ENCODE measurements at regions of chr1 and their contacts with region 1.

Region 1: GRCh38 chr1:92784639-92785500 is at the start of gene EVI5:
- DNase-seq: peak; percentile 96
- H3K4me3 Mint-ChIP-seq: peak within 1 kb of the TSS; percentile 72
- H3K27ac Mint-ChIP-seq: peak within 1 kb of the TSS; percentile 81
- H3K4me1 Mint-ChIP-seq: peaks cover 22% of the 10 kb centered on the region
- H3K27me3 Mint-ChIP-seq: no peaks in the 10 kb centered on the region
- CTCF ChIP-seq: no peak
- total RNA-seq, gene EVI5: 29.5 and 33.9 TPM in 2 replicates

Region 2: GRCh38 chr1:92749024-92749634 is 35.7 kb before region 1 on chr1:
- CTCF ChIA-PET with region 1: interaction called, 21 read pairs
- intact Hi-C with region 1: no loop called
- DNase-seq: peak; percentile 50
- H3K4me3 Mint-ChIP-seq: no peak overlapping the region
- H3K27ac Mint-ChIP-seq: no peak overlapping the region
- H3K4me1 Mint-ChIP-seq: peaks cover 25% of the 10 kb centered on the region
- H3K27me3 Mint-ChIP-seq: no peaks in the 10 kb centered on the region
- CTCF ChIP-seq: peak; percentile 62

Region 3: DNA sequence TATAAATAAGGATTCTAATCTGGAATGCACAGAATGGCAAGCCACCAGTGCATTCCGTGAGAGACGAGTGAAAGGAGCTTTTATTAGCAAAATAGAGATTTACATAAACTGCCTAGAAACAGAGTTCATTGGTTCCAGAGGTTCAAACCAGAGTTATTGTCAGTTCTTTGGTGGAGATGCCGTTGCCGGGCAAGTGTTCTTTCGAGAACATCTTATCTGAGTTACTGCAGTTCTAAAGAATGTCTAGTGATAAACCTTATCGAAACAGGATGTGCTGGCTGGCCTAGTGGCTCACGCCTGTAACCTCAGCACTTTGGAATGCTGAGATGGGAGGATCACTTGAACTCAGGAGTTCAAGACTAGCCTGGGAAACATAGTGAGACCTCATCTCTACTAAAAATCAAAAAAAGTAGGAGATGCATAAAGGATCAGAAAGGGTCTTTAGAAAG is 19.9 kb after region 1 on chr1:
- CTCF ChIA-PET with region 1: interaction called, 7 read pairs
- intact Hi-C with region 1: loop called (anchors 2 kb)
- DNase-seq: peak; percentile 73
- H3K4me3 Mint-ChIP-seq: no peak overlapping the region
- H3K27ac Mint-ChIP-seq: peak overlapping the region; percentile 87
- H3K4me1 Mint-ChIP-seq: peaks cover 45% of the 10 kb centered on the region
- H3K27me3 Mint-ChIP-seq: no peaks in the 10 kb centered on the region
- CTCF ChIP-seq: no peak

Region 4: DNA sequence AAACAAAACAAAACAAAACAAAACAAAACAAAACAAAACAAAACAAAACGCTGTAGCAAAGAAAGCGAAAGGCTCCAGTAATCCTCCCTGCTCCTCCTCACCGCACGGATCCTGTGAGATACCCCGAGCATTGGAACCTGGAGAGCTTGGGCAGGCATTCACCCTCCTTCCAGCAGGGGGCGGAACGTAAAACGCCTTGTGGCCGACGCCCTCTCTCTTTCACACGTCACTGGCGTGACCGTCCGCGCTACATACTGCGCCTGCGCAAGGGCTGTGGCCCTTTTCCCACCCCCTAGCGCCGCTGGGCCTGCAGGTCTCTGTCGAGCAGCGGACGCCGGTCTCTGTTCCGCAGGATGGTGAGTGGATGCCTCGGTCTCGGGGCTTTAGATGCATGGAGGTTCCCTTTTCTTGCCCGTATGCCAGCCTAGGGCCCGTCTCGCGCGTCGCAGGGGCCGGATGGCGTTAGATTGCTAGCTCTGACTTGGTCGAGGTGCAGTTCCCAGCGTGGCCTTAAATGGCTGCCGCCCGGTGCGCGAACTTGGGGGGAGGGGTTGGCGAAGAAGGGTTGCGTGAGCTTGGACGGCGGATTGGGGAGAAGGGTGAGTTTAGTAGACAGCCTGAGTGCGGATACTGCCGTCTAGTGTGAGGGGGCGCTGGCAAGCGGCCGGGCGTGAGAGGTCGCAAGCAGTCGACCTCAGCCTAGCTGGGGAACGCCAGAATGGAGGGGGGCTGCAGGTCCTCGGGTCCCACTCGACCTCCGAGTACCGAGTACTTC is 47.1 kb after region 1 on chr1 and contains the start of gene RPL5:
- CTCF ChIA-PET with region 1: interaction called, 4 read pairs
- intact Hi-C with region 1: loop called (anchors 5 kb)
- DNase-seq: peak; percentile 98
- H3K4me3 Mint-ChIP-seq: peak within 1 kb of the TSS; percentile 97
- H3K27ac Mint-ChIP-seq: peak within 1 kb of the TSS; percentile 100
- H3K4me1 Mint-ChIP-seq: peaks cover 28% of the 10 kb centered on the region
- H3K27me3 Mint-ChIP-seq: no peaks in the 10 kb centered on the region
- CTCF ChIP-seq: peak; percentile 87
- total RNA-seq, gene RPL5: 672 and 835 TPM in 2 replicates

Measured in Calu3 (cell line).